Dorsolateral prefrontal cortex (tissue), 120 donors: ENCODE measurements at regions of chr16 and their contacts with region 1.

Region 1: DNA sequence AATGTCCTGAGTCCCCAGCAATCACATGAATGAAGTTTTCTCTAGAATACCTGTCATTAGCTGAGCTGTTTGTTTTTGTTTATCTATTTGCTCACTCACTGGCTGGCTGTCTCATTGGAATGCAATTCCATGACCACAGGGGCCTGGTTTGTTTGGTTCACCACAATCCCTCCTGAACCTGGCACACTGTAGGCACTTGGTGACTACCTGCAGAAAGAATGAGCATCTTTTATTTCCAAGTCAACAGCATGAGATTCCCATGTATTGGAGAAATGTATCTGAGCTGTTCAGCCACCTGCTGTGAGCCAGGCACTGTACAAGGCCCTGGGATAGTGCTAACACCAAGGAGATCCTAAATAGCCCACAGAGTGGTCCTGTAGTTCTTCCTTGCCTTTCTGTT is 345.1 kb downstream of the XYLT1 start:
- DNase-seq: no peak
- H3K4me3 ChIP-seq: no peak overlapping the region
- H3K27ac ChIP-seq: no peak overlapping the region
- H3K27me3 ChIP-seq: no peaks in the 10 kb centered on the region
- CTCF ChIP-seq: no peak

Region 2: DNA sequence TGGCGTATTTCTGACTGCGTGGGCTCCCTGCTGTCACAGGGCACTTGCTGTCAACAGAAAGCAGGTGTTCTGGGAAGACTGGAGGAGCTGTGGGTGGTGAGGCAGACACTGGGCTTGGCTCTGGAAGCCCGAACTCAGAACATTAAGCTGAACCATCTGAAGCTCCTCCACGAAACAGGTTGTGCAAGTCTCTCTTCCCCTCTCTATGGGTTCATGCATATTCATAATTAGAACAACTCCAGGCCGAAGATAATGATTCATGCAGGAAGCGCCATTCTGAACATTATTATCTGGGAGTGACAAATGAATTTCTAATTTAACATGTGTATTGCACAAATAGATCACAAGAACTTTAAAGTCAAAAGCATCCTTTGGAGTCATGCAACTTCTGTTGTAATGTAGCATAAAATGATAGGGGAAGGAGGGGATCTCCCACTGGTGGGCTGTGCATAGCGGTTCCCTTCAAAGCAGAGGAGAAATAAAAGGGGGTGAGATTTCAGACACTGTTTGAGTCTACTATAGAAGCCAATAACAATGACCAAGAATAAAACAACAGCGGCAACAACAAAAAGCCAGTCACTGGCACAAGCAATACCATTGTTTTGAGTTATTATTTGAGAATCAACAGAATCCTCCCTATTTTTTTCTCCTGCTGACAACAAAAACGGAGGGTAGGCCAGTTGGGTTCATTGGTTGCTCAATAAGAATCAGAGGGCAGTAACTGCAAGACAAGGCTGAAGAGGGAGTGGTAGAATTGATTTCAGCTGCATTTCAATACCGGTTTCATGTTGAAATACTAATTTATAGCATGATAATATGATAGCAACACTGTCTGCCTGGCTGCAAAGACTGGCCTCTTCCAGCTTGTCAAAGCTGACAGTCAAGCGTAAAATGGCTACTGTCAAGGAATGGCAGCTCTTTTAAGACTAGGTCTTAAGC is 62.2 kb before region 1 on chr16:
- intact Hi-C with region 1: loop called in 1 of 2 experiments (anchors 10 kb)
- DNase-seq: peak in 3 of 10 donors; percentile 41 to 46 (median 45)
- H3K4me3 ChIP-seq: no peak overlapping the region
- H3K27ac ChIP-seq: peak overlapping the region in 50 of 59 donors; percentile 1 to 81 (median 46)
- H3K27me3 ChIP-seq: peaks cover 0 to 5% (median 0%) of the 10 kb centered on the region in 45 donors
- CTCF ChIP-seq: no peak